ENCODE measurements at regions of chr3 and their contacts with region 1.

Region 1: DNA sequence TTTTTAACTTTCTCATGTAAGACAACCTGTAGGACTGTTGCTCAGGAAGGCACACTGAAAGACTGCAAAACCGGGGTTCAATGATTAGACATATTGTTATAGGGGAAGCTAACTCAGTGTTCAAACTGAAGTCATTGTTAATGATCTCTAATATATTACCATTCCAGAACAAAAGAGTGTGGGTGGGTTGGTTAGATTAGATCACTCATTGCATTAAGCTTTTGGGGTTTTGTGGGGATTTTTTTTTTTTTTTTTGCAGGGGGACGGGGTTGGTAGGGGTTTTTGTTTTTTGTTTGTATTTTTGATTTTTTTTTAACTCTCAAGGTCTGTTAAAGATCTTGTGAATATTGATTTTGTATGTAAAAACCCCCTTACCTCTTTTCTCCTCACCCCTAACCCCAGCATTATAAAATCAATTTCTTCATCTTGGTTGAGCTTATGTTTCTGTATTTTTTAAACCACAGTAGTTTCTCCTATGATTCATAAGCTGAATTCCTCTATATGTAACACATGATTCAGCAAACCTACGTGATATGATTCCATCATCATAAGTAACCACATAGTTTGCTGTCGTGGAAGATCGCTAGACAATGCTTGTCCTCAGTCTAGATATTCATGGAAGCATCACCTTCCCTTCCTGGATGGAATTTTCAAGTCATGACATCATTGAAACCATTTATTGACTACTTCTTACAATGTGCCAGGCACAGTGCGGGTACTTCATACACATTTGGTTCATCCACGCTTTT is 544.1 kb upstream of the MDFIC2 start:
- DNase-seq: no peak
- H3K4me3 Mint-ChIP-seq: no peak overlapping the region
- H3K27ac Mint-ChIP-seq: peak overlapping the region; percentile 49
- H3K4me1 Mint-ChIP-seq: peaks cover 22% of the 10 kb centered on the region
- H3K27me3 Mint-ChIP-seq: peaks cover 6% of the 10 kb centered on the region

Region 2: DNA sequence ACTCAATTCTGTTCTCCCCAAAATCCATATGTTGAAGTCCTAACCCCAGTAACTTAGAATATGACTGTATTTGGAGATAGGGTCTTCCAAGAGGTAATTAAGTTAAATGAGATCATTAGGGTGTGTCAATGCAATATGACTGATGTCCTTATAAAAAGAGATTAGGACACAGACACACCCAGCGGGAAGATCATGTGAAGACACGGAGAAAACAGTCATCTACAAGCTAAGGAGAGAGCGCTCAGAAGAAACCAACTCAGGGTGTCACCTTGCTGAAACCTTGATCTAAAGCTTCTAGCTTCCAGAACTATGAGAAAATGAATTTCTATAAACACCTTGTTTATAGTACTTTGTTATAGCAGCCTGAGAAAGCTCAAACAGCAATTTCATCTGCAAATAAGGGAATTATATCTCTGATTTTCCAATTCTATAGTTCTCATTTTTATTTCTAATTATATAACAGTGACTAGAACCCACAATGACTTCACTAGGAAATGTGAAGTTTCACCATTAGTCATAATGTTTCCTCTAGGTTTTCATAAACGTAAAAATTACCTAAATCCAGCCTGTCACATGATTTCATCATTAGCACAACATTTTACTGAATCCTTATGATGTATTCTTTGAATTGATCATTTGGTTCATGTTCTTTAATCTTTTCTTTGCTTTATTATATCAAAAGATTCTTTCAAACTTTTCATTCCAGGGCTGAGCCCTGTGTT is 85.0 kb before region 1 on chr3:
- intact Hi-C with region 1: loop called (anchors 2 kb)
- DNase-seq: no peak
- H3K4me3 Mint-ChIP-seq: no peak overlapping the region
- H3K27ac Mint-ChIP-seq: no peak overlapping the region
- H3K4me1 Mint-ChIP-seq: no peaks in the 10 kb centered on the region
- H3K27me3 Mint-ChIP-seq: peaks cover 8% of the 10 kb centered on the region

Region 3: GRCh38 chr3:71389911-71390573 is 533.5 kb after region 1 on chr3:
- intact Hi-C with region 1: loop called (anchors 2 kb)
- DNase-seq: no peak
- H3K4me3 Mint-ChIP-seq: peak overlapping the region; percentile 10
- H3K27ac Mint-ChIP-seq: peak overlapping the region; percentile 27
- H3K4me1 Mint-ChIP-seq: peaks cover 33% of the 10 kb centered on the region
- H3K27me3 Mint-ChIP-seq: peaks cover 18% of the 10 kb centered on the region

Measured in activated T-helper 1 cell treated with anti-CD3 and anti-CD28 coated beads, Interleukin-12 subunit alpha, Interleukin-12 subunit beta, Interleukin-2, Interleukin-4 antibody, amounts not matched to agents 30 ng/mL and 10 ng/mL and 1 ng/mL, durations not matched to agents 14 hours and 24 hours and 36 hours (primary cell).